ENCODE measurements at regions of chr17 and their contacts with region 1.

Region 1: DNA sequence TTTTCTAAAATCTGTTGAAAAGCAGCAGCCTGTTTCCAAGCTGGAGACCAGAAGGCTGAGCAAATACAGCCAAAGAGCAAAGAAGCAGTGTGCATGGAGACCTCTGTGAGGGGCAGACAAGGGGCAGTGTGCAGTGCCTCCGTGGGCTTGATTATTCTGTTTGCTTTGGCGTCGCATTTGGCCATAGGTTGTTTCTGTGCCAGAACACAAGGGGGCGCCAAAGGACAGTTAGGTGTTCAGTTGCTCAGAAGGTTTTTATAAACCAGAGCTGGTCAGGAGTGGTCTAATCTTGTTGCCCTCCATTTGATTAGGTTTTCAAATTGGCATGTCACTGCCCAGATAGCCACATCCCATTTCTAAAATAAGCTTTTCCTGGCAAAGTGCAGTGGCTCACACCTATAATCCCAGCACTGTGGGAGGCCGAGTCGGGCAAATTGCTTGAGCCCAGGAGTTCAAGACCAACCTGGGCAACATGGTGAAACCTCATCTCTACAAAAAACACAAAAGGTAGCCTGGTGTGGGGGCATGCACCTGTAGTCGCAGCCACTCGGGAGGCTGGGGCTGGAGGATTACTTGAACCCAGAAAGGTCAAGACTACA is 10.6 kb downstream of the MYH3 start:
- DNase-seq: peak; percentile 71
- H3K4me3 Mint-ChIP-seq: no peak overlapping the region
- H3K27ac Mint-ChIP-seq: no peak overlapping the region
- H3K4me1 Mint-ChIP-seq: no peaks in the 10 kb centered on the region
- H3K27me3 Mint-ChIP-seq: no peaks in the 10 kb centered on the region
- CTCF ChIP-seq: peak; percentile 79

Region 2: DNA sequence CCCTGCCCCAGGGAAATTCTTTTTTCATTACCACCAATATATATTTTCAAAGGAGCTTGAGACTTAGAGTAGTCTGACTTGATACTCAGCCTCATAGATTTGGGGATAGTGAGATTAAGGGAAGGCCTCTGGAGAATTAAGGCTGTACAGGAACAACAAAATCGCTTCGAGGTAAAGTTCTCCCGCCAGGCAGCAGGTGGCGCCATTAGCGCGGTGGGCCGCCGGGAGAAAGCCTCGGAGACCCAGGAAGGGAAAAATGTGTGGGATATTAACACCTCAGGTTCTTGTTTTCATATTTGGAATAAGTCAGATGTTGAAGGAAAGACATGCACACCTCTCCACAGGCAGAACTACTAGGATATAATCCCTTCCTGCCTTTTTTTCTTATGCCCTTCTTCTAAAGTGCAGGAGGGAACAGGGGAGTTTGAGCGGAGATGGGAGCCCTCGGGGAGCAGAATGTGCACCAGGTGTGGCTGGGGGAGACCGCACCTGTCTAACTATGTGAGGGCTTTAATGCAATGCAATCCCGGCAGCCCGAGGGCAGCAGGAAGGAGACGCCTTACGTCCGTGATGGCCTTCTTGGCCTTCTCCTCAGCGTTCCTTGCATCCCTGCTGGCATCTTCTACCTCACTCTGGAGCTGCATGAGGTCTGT is 15.3 kb before region 1 on chr17:
- CTCF ChIA-PET with region 1: interaction called, 105 read pairs
- POLR2A ChIA-PET with region 1: interaction called, 4 read pairs
- intact Hi-C with region 1: no loop called
- DNase-seq: peak; percentile 24
- H3K4me3 Mint-ChIP-seq: no peak overlapping the region
- H3K27ac Mint-ChIP-seq: no peak overlapping the region
- H3K4me1 Mint-ChIP-seq: no peaks in the 10 kb centered on the region
- H3K27me3 Mint-ChIP-seq: no peaks in the 10 kb centered on the region
- CTCF ChIP-seq: peak; percentile 66

Region 3: DNA sequence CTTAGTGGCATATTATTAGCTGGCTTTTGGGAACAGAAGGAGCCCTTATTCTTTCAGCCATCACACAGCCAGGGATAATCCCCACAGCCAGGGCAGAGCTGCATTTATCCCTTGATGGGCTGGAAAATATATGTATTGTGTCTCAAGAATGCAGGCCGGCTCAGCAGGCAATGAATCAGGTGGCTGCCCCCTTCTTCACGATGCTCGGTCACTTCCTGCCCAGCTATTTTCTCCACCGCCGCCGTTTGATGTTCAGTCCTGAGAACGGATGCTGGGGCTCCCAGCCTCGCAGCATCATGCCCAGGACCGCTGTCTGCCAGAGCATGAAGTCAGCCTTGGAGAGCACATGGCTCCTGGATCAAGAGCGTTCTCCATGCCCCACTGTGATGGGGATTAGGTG is 14.9 kb after region 1 on chr17:
- CTCF ChIA-PET with region 1: interaction called, 20 read pairs
- POLR2A ChIA-PET with region 1: no interaction called
- intact Hi-C with region 1: no loop called
- DNase-seq: no peak
- H3K4me3 Mint-ChIP-seq: no peak overlapping the region
- H3K27ac Mint-ChIP-seq: no peak overlapping the region
- H3K4me1 Mint-ChIP-seq: no peaks in the 10 kb centered on the region
- H3K27me3 Mint-ChIP-seq: no peaks in the 10 kb centered on the region
- CTCF ChIP-seq: no peak

Region 4: GRCh38 chr17:10666906-10667305 is 20.4 kb after region 1 on chr17:
- CTCF ChIA-PET with region 1: interaction called, 18 read pairs
- POLR2A ChIA-PET with region 1: no interaction called
- intact Hi-C with region 1: no loop called
- DNase-seq: peak; percentile 6
- H3K4me3 Mint-ChIP-seq: no peak overlapping the region
- H3K27ac Mint-ChIP-seq: no peak overlapping the region
- H3K4me1 Mint-ChIP-seq: no peaks in the 10 kb centered on the region
- H3K27me3 Mint-ChIP-seq: no peaks in the 10 kb centered on the region
- CTCF ChIP-seq: no peak

Region 5: DNA sequence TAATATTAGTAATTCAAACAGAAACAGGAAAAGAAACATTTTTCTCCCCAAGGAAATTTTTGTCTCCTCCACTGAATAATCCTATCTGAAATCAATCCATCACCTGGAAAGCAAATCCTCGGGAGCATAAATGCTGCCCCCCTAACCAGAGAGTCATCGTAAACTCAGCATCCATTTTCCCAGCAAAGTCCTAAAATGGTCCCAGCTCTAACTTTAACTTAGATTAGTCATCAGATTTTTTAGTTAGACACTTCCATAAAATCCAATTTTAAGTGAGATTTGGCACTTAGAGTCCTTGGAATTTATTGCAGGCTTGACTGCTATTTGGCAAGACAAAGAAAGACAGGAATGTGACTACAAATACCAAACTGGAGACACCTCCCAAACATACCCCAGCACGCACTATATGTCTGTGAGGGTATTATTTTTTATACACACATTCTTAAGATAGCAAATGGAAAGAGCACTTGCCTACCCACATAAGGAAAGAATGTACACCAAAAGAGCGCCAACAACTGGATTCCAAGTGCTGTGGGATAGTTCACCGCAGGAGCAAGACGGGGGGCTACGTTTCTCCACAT is 35.5 kb after region 1 on chr17:
- CTCF ChIA-PET with region 1: interaction called, 15 read pairs
- POLR2A ChIA-PET with region 1: no interaction called
- intact Hi-C with region 1: no loop called
- DNase-seq: no peak
- H3K4me3 Mint-ChIP-seq: no peak overlapping the region
- H3K27ac Mint-ChIP-seq: no peak overlapping the region
- H3K4me1 Mint-ChIP-seq: no peaks in the 10 kb centered on the region
- H3K27me3 Mint-ChIP-seq: no peaks in the 10 kb centered on the region
- CTCF ChIP-seq: no peak

Region 6: GRCh38 chr17:11144358-11145233 is 498.1 kb after region 1 on chr17:
- CTCF ChIA-PET with region 1: interaction called, 10 read pairs
- POLR2A ChIA-PET with region 1: no interaction called
- intact Hi-C with region 1: no loop called
- DNase-seq: peak; percentile 46
- H3K4me3 Mint-ChIP-seq: no peak overlapping the region
- H3K27ac Mint-ChIP-seq: no peak overlapping the region
- H3K4me1 Mint-ChIP-seq: peaks cover 14% of the 10 kb centered on the region
- H3K27me3 Mint-ChIP-seq: no peaks in the 10 kb centered on the region
- CTCF ChIP-seq: peak; percentile 74

Region 7: GRCh38 chr17:11935734-11936406 is 1289.4 kb after region 1 on chr17:
- CTCF ChIA-PET with region 1: interaction called, 17 read pairs
- POLR2A ChIA-PET with region 1: no interaction called
- intact Hi-C with region 1: no loop called
- DNase-seq: peak; percentile 79
- H3K4me3 Mint-ChIP-seq: no peak overlapping the region
- H3K27ac Mint-ChIP-seq: no peak overlapping the region
- H3K4me1 Mint-ChIP-seq: peaks cover 5% of the 10 kb centered on the region
- H3K27me3 Mint-ChIP-seq: no peaks in the 10 kb centered on the region
- CTCF ChIP-seq: peak; percentile 94